Activated T-helper 1 cell treated with anti-CD3 and anti-CD28 coated beads, Interleukin-12 subunit alpha, Interleukin-12 subunit beta, Interleukin-2, Interleukin-4 antibody, amounts not matched to agents 30 ng/mL and 10 ng/mL and 1 ng/mL, durations not matched to agents 14 hours and 24 hours and 36 hours (primary cell): ENCODE measurements at regions of chr1 and their contacts with region 1.

Region 1: DNA sequence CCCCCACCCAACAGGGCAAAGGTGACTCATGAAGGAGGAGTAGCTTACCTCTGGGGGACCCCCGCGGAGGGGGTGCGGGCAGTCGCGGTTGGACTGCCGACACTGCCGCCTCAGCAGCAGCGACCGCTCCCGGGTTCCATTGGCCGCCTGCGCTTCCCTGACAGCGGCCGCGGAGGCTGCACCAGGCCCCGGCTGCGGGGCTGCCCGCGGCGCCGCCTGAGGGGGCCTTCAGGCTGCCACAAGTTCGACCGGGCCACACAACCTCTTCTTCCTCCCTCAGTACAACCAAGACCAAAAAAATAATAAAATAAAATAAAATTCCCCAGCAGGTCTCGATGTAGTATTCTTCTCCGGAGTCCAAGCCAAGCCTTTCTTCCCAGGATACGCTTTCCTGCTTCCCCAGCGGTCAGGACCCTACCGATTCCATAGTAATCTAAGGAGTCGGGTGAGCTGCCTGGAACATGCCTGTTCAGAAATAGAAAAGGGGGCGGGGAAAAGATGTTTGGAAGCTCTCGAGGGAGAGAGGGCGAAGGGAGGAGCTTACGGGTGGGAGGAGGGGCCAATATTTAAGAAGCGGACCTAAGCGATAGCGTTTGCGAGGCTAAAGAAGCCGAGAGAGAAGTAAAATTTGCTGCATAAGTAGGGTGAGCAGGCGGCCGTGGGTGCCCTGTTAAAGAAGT is at the start of gene PI4KB:
- DNase-seq: peak; percentile 86
- H3K4me3 Mint-ChIP-seq: peak within 1 kb of the TSS; percentile 91
- H3K27ac Mint-ChIP-seq: peak within 1 kb of the TSS; percentile 90
- H3K4me1 Mint-ChIP-seq: peaks cover 40% of the 10 kb centered on the region
- H3K27me3 Mint-ChIP-seq: peaks cover 1% of the 10 kb centered on the region
- total RNA-seq, gene PI4KB: 52.4 and 54.7 TPM in 2 replicates

Region 2: DNA sequence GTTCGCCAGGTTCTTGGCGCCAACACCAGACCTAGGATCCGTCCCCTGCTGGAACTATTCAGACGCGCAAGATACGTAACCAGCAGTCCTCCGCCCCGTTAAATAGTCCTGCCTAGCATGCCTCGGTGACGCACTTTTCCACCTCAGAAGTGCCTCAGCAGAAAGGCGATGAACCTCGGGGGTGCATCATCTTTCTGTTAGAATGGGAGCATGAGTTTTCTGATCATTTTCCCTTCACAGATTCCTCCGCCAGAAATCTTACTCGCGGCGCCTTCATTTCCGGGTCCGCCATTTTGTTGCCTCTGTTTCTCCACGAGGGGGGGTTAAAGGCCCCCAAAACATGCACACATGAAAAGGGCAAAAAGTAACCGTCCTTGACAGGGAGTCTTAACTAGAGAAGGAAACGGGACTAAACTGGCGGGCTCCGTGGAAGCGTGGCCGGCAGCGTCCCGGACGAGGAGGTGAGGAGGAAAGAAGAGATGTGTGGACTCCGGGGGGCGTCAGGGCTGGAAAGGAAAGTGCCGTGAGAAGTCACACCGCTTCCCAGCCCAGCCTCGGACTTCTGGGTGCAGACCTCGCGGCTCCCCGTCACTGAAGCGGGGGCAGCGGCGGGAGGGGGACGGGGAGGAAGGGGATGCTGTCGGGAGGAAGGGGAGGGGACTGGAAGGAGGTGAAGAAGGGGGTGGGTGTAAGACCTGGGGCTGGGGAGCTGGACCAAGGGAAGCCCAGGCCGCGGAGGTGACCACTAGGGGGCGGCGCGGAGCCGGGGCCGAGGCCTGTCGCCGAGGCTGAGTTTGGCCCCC is 256.7 kb before region 1 on chr1 and contains the start of gene GABPB2:
- intact Hi-C with region 1: loop called (anchors 2 kb)
- DNase-seq: peak; percentile 81
- H3K4me3 Mint-ChIP-seq: peak within 1 kb of the TSS; percentile 98
- H3K27ac Mint-ChIP-seq: peak within 1 kb of the TSS; percentile 100
- H3K4me1 Mint-ChIP-seq: peaks cover 17% of the 10 kb centered on the region
- H3K27me3 Mint-ChIP-seq: no peaks in the 10 kb centered on the region
- total RNA-seq, gene GABPB2: 19.4 and 21.5 TPM in 2 replicates

Region 3: DNA sequence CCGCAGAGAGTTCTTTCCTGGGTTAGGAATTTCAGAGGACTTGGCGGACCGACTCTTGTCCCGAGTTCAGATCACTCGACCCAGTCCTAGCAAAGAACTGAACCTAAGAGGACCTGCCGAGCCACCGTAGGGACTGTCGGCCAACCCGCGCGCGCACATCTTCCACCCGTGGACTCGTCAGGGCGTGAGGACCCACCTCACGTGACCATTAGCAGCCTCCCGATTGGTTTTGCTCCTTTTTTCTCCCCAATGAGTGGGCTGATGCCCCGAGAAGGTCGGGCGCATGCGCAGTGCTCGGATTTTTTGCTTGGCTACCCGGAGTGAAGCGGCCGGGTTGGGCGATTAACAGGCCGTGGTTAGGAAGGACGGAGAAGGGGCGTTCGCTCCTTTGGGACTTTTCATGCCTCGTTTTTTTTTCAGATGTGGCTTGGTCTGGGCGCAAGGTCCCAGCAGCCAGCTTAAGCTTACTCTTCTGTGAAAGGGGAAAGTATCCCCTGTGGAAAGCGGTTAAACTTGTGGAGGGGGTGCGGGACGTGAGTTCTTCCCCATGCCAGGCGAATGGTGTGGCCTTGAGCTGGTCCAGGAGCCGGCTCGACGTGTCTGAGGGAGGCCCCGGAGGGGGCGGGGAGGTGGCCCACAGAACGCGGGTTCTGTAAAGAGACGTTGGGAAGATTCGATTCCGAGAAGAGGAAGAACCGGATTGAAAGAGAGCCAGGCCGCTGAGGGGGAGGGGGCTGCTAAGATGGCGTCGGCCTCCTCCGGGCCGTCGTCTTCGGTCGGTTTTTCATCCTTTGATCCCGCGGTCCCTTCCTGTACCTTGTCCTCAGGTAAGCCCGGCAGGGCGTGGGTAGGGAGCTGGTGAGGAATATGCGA is 128.9 kb before region 1 on chr1 and contains the start of gene PIP5K1A:
- intact Hi-C with region 1: loop called (anchors 1 kb)
- DNase-seq: peak; percentile 97
- H3K4me3 Mint-ChIP-seq: peak within 1 kb of the TSS; percentile 94
- H3K27ac Mint-ChIP-seq: peak within 1 kb of the TSS; percentile 94
- H3K4me1 Mint-ChIP-seq: peaks cover 35% of the 10 kb centered on the region
- H3K27me3 Mint-ChIP-seq: peaks cover 7% of the 10 kb centered on the region
- total RNA-seq, gene PIP5K1A: 98.9 and 101 TPM in 2 replicates

Region 4: GRCh38 chr1:151311589-151312331 is 15.6 kb before region 1 on chr1:
- intact Hi-C with region 1: loop called (anchors 1 kb)
- DNase-seq: peak; percentile 60
- H3K4me3 Mint-ChIP-seq: no peak overlapping the region
- H3K27ac Mint-ChIP-seq: peak overlapping the region; percentile 93
- H3K4me1 Mint-ChIP-seq: peaks cover 37% of the 10 kb centered on the region
- H3K27me3 Mint-ChIP-seq: no peaks in the 10 kb centered on the region

Region 5: GRCh38 chr1:151346769-151347522 is 19.6 kb after region 1 on chr1 and contains the start of gene RFX5:
- intact Hi-C with region 1: loop called (anchors 1 kb)
- DNase-seq: peak; percentile 95
- H3K4me3 Mint-ChIP-seq: peak within 1 kb of the TSS; percentile 95
- H3K27ac Mint-ChIP-seq: peak within 1 kb of the TSS; percentile 99
- H3K4me1 Mint-ChIP-seq: peaks cover 45% of the 10 kb centered on the region
- H3K27me3 Mint-ChIP-seq: no peaks in the 10 kb centered on the region
- total RNA-seq, gene RFX5: 78.1 and 83.4 TPM in 2 replicates

Region 6: DNA sequence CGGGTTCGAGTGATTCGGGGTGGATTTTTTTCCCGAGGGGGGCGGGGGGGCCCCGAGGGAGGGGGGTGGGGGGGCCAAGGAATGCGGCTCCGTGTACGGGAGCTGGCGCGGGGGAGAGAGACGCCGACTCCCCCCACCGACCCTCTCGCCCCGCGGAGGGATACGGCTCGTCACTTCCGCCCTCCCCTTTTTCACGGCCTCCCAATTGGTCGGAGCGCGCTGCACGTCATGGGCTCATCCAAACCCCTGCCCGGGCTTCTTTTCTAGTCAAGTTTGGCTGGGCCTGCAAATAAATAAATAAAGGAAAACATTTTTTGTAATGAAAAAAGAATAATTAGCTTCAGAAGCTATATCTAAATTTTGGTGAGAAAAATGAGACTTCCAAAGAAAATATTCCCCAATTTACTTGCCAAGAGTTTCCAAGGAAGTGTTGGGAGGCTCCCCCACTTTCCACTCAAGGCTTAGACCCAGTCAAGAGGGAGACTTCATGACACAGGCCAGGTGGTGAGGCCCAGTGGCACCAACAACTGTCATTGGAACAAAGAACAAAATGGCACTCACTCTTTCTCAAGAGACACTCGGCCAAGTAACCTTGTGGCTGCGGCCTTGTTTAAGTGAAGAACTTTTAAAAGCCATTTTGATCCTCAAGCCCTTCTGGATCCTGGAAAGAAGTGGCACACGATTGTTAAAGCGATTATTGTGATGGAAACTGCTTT is 132.1 kb after region 1 on chr1 and contains the start of gene POGZ:
- intact Hi-C with region 1: loop called (anchors 1 kb)
- DNase-seq: peak; percentile 88
- H3K4me3 Mint-ChIP-seq: peak within 1 kb of the TSS; percentile 90
- H3K27ac Mint-ChIP-seq: peak within 1 kb of the TSS; percentile 97
- H3K4me1 Mint-ChIP-seq: peaks cover 21% of the 10 kb centered on the region
- H3K27me3 Mint-ChIP-seq: peaks cover 13% of the 10 kb centered on the region
- total RNA-seq, gene POGZ: 89.1 and 91.1 TPM in 2 replicates